OCI-LY7 (cell line): ENCODE measurements at regions of chr17 and their contacts with region 1.

Region 1: DNA sequence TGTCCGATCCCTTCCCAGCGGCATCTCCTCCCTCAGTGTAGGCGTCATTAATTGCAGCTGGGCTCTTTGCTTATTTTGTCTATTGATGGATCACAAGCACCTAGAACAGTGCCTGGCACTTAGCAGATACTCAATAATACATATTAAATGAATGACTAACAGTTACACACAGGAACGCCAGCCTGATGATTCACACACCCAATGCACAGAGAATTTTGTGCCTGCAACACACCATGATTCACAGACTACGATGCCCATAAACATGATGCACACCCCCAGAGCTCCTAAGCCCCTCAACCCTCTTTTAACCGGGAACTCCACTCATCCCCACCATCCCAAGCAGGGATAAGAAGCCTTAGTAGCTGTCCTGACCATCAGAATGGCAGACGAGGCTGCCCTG is 66.6 kb upstream of the TMEM97 start:
- DNase-seq: no peak
- H3K4me3 ChIP-seq: no peak overlapping the region
- H3K27ac ChIP-seq: no peak overlapping the region
- H3K4me1 ChIP-seq: peaks cover 4% of the 10 kb centered on the region
- CTCF ChIP-seq: no peak

Region 2: GRCh38 chr17:27805520-27806146 is 446.8 kb before region 1 on chr17:
- CTCF ChIA-PET with region 1: interaction called, 4 read pairs
- POLR2A ChIA-PET with region 1: no interaction called
- intact Hi-C with region 1: loop called (anchors 1 kb)
- DNase-seq: peak; percentile 81
- H3K4me3 ChIP-seq: peak overlapping the region; percentile 55
- H3K27ac ChIP-seq: peak overlapping the region; percentile 41
- H3K4me1 ChIP-seq: peaks cover 13% of the 10 kb centered on the region
- CTCF ChIP-seq: peak; percentile 88

Region 3: GRCh38 chr17:27968206-27968732 is 284.2 kb before region 1 on chr17:
- CTCF ChIA-PET with region 1: no interaction called
- POLR2A ChIA-PET with region 1: no interaction called
- intact Hi-C with region 1: loop called (anchors 10 kb)
- DNase-seq: no peak
- H3K4me3 ChIP-seq: no peak overlapping the region
- H3K27ac ChIP-seq: no peak overlapping the region
- H3K4me1 ChIP-seq: no peaks in the 10 kb centered on the region
- CTCF ChIP-seq: no peak

Region 4: DNA sequence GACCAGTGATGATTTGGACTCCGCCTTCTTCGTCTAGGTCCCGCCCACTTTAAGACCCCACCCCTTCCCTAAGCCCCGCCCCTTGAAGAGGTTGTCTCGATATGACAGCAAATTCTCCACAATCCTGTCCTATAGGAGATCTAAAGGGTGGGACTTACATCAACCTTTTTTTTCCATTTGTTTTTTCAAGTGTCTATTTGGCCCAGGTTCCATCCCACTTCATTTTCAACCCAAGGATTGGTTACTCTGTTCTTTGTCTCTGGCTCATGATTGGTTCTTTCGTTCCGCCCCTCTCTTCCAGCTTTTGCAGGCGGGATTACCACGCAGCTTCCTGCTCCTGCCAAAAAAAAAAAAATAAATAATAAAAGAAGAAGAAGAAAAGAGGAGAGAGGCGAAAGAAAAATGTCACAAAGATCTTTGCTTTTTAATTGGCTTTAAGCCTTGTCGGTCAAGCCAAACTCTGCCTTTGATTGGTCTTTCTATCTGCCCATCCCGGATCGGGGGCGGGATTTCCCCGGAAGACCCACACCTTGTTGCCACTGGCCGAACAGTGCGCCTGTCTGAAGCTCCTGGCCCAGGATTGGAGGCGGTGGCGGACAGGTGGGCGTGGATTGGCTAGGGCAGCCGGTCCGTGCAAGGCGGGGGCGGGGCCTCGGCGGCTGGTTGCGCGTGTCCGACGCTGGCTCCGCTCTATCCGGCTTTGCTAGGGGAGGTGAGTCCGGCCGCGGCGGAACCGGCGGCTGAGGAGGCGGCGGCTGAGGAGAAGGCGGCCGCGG is 211.2 kb before region 1 on chr17:
- CTCF ChIA-PET with region 1: no interaction called
- POLR2A ChIA-PET with region 1: no interaction called
- intact Hi-C with region 1: loop called (anchors 10 kb)
- DNase-seq: peak; percentile 99
- H3K4me3 ChIP-seq: peak overlapping the region; percentile 87
- H3K27ac ChIP-seq: peak overlapping the region; percentile 65
- H3K4me1 ChIP-seq: peaks cover 48% of the 10 kb centered on the region
- CTCF ChIP-seq: no peak

Region 5: GRCh38 chr17:28193241-28193640 is 59.2 kb before region 1 on chr17:
- CTCF ChIA-PET with region 1: no interaction called
- POLR2A ChIA-PET with region 1: no interaction called
- intact Hi-C with region 1: loop called (anchors 10 kb)
- DNase-seq: no peak
- H3K4me3 ChIP-seq: no peak overlapping the region
- H3K27ac ChIP-seq: no peak overlapping the region
- H3K4me1 ChIP-seq: no peaks in the 10 kb centered on the region
- CTCF ChIP-seq: no peak

Region 6: GRCh38 chr17:28416703-28417311 is 164.4 kb after region 1 on chr17:
- CTCF ChIA-PET with region 1: no interaction called
- POLR2A ChIA-PET with region 1: no interaction called
- intact Hi-C with region 1: loop called (anchors 10 kb)
- DNase-seq: peak; percentile 68
- H3K4me3 ChIP-seq: no peak overlapping the region
- H3K27ac ChIP-seq: no peak overlapping the region
- H3K4me1 ChIP-seq: no peaks in the 10 kb centered on the region
- CTCF ChIP-seq: peak; percentile 91